Activated T-helper 1 cell treated with anti-CD3 and anti-CD28 coated beads, Interleukin-12 subunit alpha, Interleukin-12 subunit beta, Interleukin-2, Interleukin-4 antibody, amounts not matched to agents 30 ng/mL and 10 ng/mL and 1 ng/mL, durations not matched to agents 14 hours and 24 hours and 36 hours (primary cell): ENCODE measurements at regions of chr5 and their contacts with region 1.

Region 1: GRCh38 chr5:140882591-140882899 is 621 bp downstream of the PCDHA13 start:
- DNase-seq: no peak
- H3K4me3 Mint-ChIP-seq: no peak overlapping the region
- H3K27ac Mint-ChIP-seq: no peak overlapping the region
- H3K4me1 Mint-ChIP-seq: no peaks in the 10 kb centered on the region
- H3K27me3 Mint-ChIP-seq: no peaks in the 10 kb centered on the region

Region 2: DNA sequence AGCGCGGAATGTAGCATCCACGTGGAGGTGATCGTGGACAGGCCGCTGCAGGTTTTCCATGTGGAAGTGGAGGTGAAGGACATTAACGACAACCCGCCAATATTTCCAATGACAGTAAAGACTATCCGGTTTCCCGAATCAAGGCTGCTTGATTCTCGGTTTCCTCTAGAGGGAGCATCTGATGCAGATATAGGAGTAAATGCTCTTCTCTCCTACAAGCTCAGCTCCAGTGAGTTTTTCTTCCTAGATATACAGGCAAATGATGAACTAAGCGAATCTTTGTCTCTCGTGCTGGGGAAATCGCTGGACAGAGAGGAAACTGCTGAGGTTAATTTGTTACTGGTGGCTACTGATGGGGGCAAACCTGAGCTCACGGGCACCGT is 87.3 kb before region 1 on chr5:
- intact Hi-C with region 1: loop called (anchors 10 kb)
- DNase-seq: no peak
- H3K4me3 Mint-ChIP-seq: no peak overlapping the region
- H3K27ac Mint-ChIP-seq: no peak overlapping the region
- H3K4me1 Mint-ChIP-seq: no peaks in the 10 kb centered on the region
- H3K27me3 Mint-ChIP-seq: no peaks in the 10 kb centered on the region